Activated CD4-positive, alpha-beta memory T cell treated with anti-CD3 and anti-CD28 coated beads for 36 hours (primary cell): ENCODE measurements at regions of chr1 and their contacts with region 1.

Region 1: GRCh38 chr1:10494754-10495474 is 20.2 kb downstream of the PEX14 start:
- DNase-seq: peak; percentile 89
- H3K4me3 Mint-ChIP-seq: peak overlapping the region; percentile 63
- H3K27ac Mint-ChIP-seq: peak overlapping the region; percentile 79
- H3K4me1 Mint-ChIP-seq: peaks cover 41% of the 10 kb centered on the region
- H3K27me3 Mint-ChIP-seq: no peaks in the 10 kb centered on the region

Region 2: DNA sequence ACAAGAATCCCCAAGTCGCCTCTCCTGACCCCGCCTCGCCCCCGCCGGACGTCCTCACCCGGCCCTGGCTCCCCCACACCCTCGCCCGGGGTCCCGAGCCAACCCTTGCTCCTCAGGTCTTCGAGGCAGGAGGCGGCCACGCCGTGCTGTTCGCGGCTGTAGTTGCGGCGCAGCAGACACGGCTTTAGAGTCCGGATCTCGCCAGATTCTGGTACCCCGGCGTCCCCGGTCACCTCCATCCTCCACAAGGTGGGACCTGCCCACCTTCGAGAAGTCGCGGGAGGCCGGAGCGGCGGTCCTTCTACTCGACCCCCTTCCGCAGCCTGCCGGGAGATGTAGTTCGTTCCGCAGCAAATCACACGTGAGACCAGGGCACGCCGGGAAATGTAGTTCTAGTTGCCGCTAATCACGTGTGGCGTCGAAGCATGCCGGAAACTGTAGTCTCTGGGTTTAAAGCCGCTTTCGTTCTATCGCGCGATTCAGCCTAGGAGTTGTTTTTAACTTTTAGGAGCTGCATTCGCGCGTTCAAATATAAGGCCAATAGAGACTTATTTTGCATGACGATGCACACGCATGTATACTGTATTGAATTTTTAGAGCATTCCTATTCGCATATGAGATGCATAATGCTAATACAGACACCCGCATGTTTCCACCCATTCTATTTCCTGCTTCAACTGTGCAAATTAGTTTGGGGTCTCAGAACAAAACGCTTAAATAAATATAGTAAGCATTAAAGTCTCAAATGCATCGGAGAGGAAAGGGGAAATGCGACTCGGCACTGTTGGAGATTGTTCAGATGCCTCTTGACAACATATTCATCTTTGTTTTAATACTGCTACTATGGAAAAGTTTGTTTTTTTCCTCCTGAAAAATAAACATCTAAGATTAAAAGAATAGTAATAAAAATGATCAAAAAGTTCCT is 22.4 kb before region 1 on chr1 and contains the start of gene DFFA:
- CTCF ChIA-PET with region 1: interaction called, 18 read pairs
- POLR2A ChIA-PET with region 1: interaction called, 4 read pairs
- intact Hi-C with region 1: loop called (anchors 1 kb)
- DNase-seq: peak; percentile 96
- H3K4me3 Mint-ChIP-seq: peak within 1 kb of the TSS; percentile 92
- H3K27ac Mint-ChIP-seq: peak within 1 kb of the TSS; percentile 82
- H3K4me1 Mint-ChIP-seq: peaks cover 31% of the 10 kb centered on the region
- H3K27me3 Mint-ChIP-seq: no peaks in the 10 kb centered on the region
- total RNA-seq, gene DFFA: 32.0 to 32.8 TPM

Region 3: DNA sequence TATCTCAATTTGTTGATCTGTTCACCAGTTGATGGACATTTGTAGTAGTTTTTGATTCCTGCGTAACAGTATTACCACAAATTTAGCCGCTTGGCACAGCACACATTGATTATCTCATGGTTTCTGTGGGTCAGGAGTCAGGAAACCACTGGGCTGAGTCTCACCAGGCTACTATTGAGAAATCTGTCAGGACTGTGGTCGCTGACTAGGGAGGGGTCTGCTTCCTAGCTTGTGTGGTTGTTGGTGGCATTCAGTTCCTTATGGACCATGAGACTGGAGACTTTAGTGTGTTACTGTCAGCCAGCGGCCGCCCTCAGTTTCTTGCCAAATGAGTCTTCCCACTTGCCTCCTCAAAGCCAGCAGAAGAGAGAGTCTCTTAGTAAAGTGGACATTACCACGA is 10.4 kb before region 1 on chr1:
- CTCF ChIA-PET with region 1: interaction called, 26 read pairs
- POLR2A ChIA-PET with region 1: interaction called, 4 read pairs
- intact Hi-C with region 1: no loop called
- DNase-seq: no peak
- H3K4me3 Mint-ChIP-seq: no peak overlapping the region
- H3K27ac Mint-ChIP-seq: no peak overlapping the region
- H3K4me1 Mint-ChIP-seq: peaks cover 6% of the 10 kb centered on the region
- H3K27me3 Mint-ChIP-seq: no peaks in the 10 kb centered on the region

Region 4: GRCh38 chr1:10522322-10522860 is 27.5 kb after region 1 on chr1:
- CTCF ChIA-PET with region 1: interaction called, 17 read pairs
- POLR2A ChIA-PET with region 1: interaction called, 3 read pairs
- intact Hi-C with region 1: no loop called
- DNase-seq: no peak
- H3K4me3 Mint-ChIP-seq: no peak overlapping the region
- H3K27ac Mint-ChIP-seq: no peak overlapping the region
- H3K4me1 Mint-ChIP-seq: peaks cover 35% of the 10 kb centered on the region
- H3K27me3 Mint-ChIP-seq: no peaks in the 10 kb centered on the region

Region 5: DNA sequence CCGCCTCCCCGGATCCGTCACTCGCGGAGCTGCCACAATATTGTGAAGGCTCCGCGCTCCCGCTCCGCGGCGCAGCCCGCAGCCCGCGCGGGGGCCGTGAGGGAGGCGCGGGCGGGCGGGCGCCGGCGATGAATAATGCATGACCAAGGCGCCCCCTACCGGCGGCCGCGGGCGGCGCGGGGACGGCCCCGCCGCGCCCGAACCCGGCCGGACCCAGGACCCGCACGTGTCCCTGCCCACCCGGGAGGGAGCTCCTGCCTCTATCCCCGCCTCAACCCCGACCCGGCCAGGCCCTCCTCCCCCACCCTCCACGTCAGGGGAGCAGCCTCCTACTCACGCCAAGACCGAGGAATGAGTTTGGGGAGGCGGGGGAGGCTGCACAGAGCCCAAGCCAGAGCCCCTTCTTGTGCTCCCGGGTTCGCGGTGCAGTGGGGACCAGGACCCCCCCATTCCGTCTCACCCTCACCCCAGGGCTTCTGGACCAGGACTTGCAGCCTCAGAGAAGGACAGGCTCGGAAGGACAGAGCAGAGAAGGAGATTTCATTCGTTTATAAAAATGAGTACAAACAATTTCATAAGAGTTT is 372.3 kb after region 1 on chr1:
- CTCF ChIA-PET with region 1: interaction called, 29 read pairs
- POLR2A ChIA-PET with region 1: no interaction called
- intact Hi-C with region 1: loop called (anchors 1 kb)
- DNase-seq: peak; percentile 60
- H3K4me3 Mint-ChIP-seq: no peak overlapping the region
- H3K27ac Mint-ChIP-seq: no peak overlapping the region
- H3K4me1 Mint-ChIP-seq: peaks cover 10% of the 10 kb centered on the region
- H3K27me3 Mint-ChIP-seq: peaks cover 60% of the 10 kb centered on the region

Region 6: GRCh38 chr1:10904396-10905358 is 409.8 kb after region 1 on chr1:
- CTCF ChIA-PET with region 1: interaction called, 10 read pairs
- POLR2A ChIA-PET with region 1: no interaction called
- intact Hi-C with region 1: no loop called
- DNase-seq: peak; percentile 38
- H3K4me3 Mint-ChIP-seq: no peak overlapping the region
- H3K27ac Mint-ChIP-seq: no peak overlapping the region
- H3K4me1 Mint-ChIP-seq: peaks cover 14% of the 10 kb centered on the region
- H3K27me3 Mint-ChIP-seq: peaks cover 2% of the 10 kb centered on the region

Region 7: DNA sequence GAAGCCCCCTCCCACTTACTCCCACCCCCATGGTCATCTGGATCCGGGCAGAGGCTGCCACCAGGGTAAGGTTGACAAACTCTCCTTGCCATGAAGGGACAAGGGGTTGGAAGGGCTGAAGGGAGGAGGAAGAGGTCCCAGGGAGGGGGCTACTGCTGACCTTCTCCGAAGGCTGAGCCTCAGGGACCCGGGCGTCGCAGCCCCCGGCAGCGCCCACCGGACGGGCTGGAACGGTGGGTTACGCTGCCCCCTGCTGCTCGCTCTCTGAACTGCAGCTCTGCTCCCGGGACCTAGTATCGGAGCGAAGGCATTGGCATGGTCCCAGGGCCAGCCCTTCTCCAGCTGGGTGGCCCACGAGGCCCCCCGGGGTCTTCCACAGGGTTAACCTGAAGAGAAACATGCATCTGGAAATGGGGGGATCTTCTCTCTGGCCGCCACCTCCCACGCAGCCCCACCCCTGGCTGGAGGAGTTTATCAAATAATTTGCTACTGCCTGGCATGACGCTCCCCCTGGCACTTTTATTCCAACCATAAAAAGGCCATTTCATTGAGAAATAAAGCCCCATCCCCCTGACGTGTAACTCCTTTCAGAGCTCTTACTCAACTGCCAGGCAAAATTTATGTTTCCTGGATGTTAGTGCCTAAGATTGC is 447.1 kb after region 1 on chr1:
- CTCF ChIA-PET with region 1: interaction called, 12 read pairs
- POLR2A ChIA-PET with region 1: no interaction called
- intact Hi-C with region 1: loop called (anchors 2 kb)
- DNase-seq: peak; percentile 70
- H3K4me3 Mint-ChIP-seq: no peak overlapping the region
- H3K27ac Mint-ChIP-seq: no peak overlapping the region
- H3K4me1 Mint-ChIP-seq: peaks cover 26% of the 10 kb centered on the region
- H3K27me3 Mint-ChIP-seq: peaks cover 39% of the 10 kb centered on the region